Activated CD8-positive, alpha-beta memory T cell treated with anti-CD3 and anti-CD28 coated beads, Interleukin-2, amount 10 ng/mL, durations not matched to agents 7 days and 5 days (primary cell): ENCODE measurements at regions of chr5 and their contacts with region 1.

Region 1: DNA sequence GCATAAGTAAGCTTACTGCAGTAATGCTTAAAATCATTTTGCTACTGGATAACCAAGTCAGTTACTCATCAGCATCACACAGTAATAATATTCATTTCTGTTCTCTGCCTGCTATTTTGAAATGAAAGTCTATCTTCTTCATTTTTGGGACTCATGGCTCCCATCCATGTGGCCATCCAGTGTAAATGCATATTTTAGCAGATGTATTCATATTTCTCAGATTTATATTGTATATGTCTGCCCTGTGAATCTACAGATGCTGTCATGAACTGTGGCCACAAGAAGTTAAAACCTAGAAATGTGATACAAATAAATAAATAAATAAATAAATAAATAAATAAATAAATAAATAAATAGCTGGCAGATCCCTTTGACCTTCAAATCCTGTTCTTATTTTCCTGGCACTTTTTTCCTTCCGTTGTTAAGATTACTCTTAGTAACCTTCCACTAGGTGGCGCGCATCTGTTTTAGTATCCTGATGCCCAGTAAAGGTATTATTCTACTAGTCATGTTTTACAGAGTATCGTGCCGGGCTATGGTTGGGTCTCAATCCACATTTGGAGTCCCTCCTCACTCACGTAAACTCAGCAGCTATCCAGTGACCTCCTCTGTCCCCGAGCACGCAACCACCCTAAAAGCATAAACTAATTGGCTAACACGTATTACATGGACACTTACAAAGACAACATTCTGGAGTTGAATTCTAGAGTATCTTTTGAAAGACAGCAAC is 79.2 kb upstream of the IL7R start:
- DNase-seq: peak; percentile 82
- ATAC-seq: peak; percentile 69
- H3K4me3 Mint-ChIP-seq: no peak overlapping the region
- H3K27ac Mint-ChIP-seq: peak overlapping the region; percentile 77
- H3K4me1 Mint-ChIP-seq: peaks cover 63% of the 10 kb centered on the region
- H3K27me3 Mint-ChIP-seq: no peaks in the 10 kb centered on the region

Region 2: DNA sequence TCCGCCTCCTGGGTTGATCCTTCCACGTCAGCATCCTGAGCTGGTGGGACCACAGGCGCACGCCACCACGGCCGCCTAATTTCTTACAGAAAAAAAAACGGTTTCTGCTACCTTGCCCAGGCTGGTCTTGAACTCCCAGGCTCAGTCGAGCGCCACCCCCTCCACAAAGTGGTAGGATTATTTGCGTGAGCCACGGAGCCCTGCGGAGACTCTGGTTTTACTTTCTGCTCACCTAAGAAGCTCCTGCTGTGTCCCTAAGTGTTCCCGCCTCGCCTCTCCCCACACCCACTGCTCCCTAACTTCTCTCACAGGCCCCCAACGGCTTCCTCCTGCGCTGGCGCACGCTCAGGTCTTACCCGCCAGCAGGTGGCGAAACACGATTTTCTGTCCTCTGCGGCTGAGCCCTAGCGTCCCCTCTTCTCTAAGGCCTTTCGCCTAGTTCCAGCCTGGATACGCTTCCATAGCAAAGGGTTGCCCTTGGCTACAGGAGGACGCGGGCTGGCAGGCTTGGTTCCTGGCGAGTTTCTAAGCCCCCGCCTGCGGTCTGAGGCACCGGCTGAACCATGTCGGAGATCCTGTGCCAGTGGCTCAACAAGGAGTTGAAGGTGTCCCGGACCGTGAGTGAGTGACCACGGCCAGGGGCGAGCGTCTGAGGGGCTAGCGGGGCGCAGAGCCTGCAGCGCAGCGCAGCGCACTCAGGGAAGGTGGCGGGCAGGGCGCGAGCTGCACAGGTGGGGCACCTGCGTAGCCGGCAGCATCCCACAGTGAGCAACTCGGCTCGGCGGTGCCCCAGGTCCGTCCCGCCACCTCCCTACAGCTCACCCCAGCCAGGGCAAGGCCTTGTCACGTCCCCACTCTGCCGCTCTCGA is 159.9 kb before region 1 on chr5 and contains the start of gene SPEF2:
- CTCF ChIA-PET with region 1: interaction called, 10 read pairs
- DNase-seq: peak; percentile 91
- ATAC-seq: peak; percentile 94
- H3K4me3 Mint-ChIP-seq: peak within 1 kb of the TSS; percentile 84
- H3K27ac Mint-ChIP-seq: peak within 1 kb of the TSS; percentile 99
- H3K4me1 Mint-ChIP-seq: peaks cover 47% of the 10 kb centered on the region
- H3K27me3 Mint-ChIP-seq: no peaks in the 10 kb centered on the region
- total RNA-seq, gene SPEF2: 5.6 to 14.1 TPM

Region 3: DNA sequence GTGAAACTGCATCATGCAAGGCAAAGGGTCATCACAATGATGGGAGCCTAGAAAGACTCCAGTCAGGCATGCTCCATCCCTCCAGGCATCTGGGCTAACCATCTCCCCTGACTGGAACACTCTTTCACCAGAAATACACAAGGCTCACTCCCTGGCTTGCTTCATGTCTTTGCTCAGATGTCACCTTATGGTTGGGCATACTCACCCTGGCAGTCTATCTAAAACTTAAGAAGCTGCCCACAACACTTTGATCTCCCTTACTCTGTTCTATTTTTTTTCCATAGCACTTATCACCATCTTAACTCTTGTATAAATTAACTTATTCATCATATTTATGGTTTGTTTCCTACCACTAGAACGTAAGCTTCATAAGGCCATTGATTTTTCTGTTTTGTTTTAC is 69.9 kb before region 1 on chr5:
- CTCF ChIA-PET with region 1: no interaction called
- DNase-seq: no peak
- ATAC-seq: no peak
- H3K4me3 Mint-ChIP-seq: no peak overlapping the region
- H3K27ac Mint-ChIP-seq: no peak overlapping the region
- H3K4me1 Mint-ChIP-seq: no peaks in the 10 kb centered on the region
- H3K27me3 Mint-ChIP-seq: no peaks in the 10 kb centered on the region

Region 4: GRCh38 chr5:35852084-35852734 is 74.7 kb after region 1 on chr5:
- CTCF ChIA-PET with region 1: interaction called, 15 read pairs
- DNase-seq: peak; percentile 59
- ATAC-seq: peak; percentile 22
- H3K4me3 Mint-ChIP-seq: peak overlapping the region; percentile 72
- H3K27ac Mint-ChIP-seq: peak overlapping the region; percentile 96
- H3K4me1 Mint-ChIP-seq: peaks cover 66% of the 10 kb centered on the region
- H3K27me3 Mint-ChIP-seq: no peaks in the 10 kb centered on the region